H1 (cell line): ENCODE measurements at regions of chr1 and their contacts with region 1.

Region 1: DNA sequence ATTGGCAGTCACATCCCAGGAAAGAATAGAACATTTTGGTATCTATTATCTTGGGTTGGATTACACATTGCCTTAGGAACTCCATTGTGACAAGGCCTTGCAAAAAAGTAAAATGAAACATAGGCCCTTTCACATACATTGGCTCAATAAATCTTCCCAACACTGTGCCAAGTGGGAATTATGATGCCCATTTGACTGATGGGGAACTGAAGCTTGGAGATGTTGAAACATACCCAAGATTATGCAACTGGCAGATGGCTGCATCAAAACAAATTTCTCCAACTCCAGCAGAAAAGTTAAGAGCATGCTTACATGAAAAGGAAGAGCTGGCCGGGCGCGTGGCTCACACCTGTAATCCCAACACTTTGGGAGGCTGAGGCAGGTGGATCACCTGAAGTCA is 26.9 kb downstream of the PLEKHO1 start:
- DNase-seq: no peak
- H3K4me3 ChIP-seq: no peak overlapping the region
- H3K27ac ChIP-seq: no peak overlapping the region
- H3K4me1 ChIP-seq: no peaks in the 10 kb centered on the region
- H3K27me3 ChIP-seq: no peaks in the 10 kb centered on the region
- CTCF ChIP-seq: no peak
- EP300 ChIP-seq: no peak
- POLR2A ChIP-seq: no peak
- RAD21 ChIP-seq: no peak

Region 2: GRCh38 chr1:150186789-150187559 is 10.4 kb after region 1 on chr1:
- CTCF ChIA-PET with region 1: interaction called, 43 read pairs
- POLR2A ChIA-PET with region 1: no interaction called
- DNase-seq: no peak
- H3K4me3 ChIP-seq: no peak overlapping the region
- H3K27ac ChIP-seq: no peak overlapping the region
- H3K4me1 ChIP-seq: peaks cover 0 to 3% (median 0%) of the 10 kb centered on the region in 4 experiments; a peak in 1 of 7 replicates
- H3K27me3 ChIP-seq: no peaks in the 10 kb centered on the region
- CTCF ChIP-seq: peak in 2 of 3 experiments; percentile 4 to 38; a peak in 2 of 4 replicates
- EP300 ChIP-seq: no peak
- POLR2A ChIP-seq: no peak
- RAD21 ChIP-seq: peak; percentile 75 to 79